ENCODE measurements at regions of chr7 and their contacts with region 1.

Region 1: GRCh38 chr7:104848138-104848990 is 165.6 kb upstream of the KMT2E start:
- DNase-seq: peak in 8 of 10 donors; percentile 26 to 72 (median 59)
- H3K4me3 ChIP-seq: peak overlapping the region in 2 of 59 donors; percentile 20 to 22
- H3K27ac ChIP-seq: peak overlapping the region in 52 of 59 donors; percentile 8 to 94 (median 72)
- H3K27me3 ChIP-seq: peaks cover 0 to 13% (median 0%) of the 10 kb centered on the region in 45 donors
- CTCF ChIP-seq: peak; percentile 63 to 95 (median 88)

Region 2: GRCh38 chr7:104231054-104232046 is 617.0 kb before region 1 on chr7:
- intact Hi-C with region 1: loop called in 1 of 2 experiments (anchors 10 kb)
- DNase-seq: peak in 9 of 10 donors; percentile 31 to 60 (median 53)
- H3K4me3 ChIP-seq: peak overlapping the region in 29 of 59 donors; percentile 0 to 47 (median 19)
- H3K27ac ChIP-seq: no peak overlapping the region
- H3K27me3 ChIP-seq: no peaks in the 10 kb centered on the region
- CTCF ChIP-seq: peak; percentile 67 to 93 (median 82)

Region 3: DNA sequence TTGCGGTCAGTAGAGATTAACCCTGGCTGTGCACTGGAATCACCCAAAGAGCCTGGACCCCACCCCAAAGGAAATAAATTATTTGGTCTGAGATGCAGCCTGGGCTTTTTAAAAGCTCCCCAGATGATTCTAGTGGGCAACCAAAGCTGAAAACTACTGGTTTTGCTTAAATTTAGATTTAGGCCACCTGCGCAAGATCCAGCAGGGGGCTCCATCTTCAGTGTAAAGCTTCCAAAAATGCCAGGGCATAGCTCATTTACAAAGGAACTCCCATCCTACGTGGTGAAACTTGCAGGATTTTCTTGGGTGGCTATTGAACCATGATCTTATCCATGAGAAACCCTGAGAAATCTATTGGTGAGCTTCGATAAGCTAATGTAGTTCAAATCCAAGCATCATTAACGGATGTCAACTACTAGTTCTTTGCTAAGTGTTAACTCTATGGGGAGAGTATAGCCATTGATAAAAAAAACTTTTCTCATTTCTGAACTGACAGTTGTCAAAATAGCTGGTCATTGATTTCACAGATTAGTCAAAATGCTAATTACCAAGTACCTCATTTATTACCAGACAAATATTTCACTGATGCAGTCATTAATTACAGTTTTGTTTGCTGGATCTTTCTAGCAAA is 204.7 kb before region 1 on chr7:
- intact Hi-C with region 1: loop called in 1 of 2 experiments (anchors 5 kb)
- DNase-seq: no peak
- H3K4me3 ChIP-seq: no peak overlapping the region
- H3K27ac ChIP-seq: no peak overlapping the region
- H3K27me3 ChIP-seq: peaks cover 0 to 8% (median 0%) of the 10 kb centered on the region in 45 donors
- CTCF ChIP-seq: peak in 34 of 56 donors; percentile 8 to 56 (median 26)

Region 4: DNA sequence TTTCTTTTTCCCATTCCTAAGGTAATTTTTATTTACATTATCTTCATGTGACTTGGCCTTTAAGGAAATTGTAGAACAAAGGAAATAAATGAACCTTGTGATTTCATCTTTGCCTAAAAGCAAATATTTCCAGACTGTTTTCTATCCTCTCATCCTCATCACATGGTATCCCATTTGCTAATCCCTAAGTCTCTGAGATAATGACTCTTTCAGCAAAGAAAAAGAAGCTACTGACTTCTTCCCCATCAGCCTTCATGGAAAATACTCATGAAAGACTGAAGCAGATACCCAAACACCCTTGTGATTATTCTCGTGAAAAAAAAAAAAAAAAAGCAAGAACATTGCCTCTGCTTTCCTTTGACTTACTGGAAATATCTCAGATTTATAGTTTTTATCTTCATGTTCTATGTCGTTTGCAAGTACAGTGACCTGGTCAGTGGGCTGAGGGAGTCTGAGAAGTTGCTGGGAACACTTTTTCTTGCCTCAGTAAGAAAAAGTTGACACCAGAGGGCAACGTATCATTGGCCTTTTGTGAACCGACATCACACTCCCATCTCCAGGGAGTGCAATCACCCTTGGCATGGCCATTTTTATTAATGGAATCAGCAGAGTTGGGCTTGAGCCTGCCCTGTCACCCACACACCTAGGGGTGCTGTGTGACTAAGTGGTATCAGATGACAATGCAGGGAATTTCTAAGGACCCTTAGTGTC is 80.4 kb before region 1 on chr7:
- intact Hi-C with region 1: loop called (anchors 1 to 2 kb)
- DNase-seq: peak in 1 of 10 donors; percentile 36
- H3K4me3 ChIP-seq: no peak overlapping the region
- H3K27ac ChIP-seq: peak overlapping the region in 2 of 59 donors; percentile 4 to 13
- H3K27me3 ChIP-seq: peaks cover 0 to 5% (median 0%) of the 10 kb centered on the region in 45 donors
- CTCF ChIP-seq: peak in 52 of 56 donors; percentile 17 to 73 (median 48)

Region 5: DNA sequence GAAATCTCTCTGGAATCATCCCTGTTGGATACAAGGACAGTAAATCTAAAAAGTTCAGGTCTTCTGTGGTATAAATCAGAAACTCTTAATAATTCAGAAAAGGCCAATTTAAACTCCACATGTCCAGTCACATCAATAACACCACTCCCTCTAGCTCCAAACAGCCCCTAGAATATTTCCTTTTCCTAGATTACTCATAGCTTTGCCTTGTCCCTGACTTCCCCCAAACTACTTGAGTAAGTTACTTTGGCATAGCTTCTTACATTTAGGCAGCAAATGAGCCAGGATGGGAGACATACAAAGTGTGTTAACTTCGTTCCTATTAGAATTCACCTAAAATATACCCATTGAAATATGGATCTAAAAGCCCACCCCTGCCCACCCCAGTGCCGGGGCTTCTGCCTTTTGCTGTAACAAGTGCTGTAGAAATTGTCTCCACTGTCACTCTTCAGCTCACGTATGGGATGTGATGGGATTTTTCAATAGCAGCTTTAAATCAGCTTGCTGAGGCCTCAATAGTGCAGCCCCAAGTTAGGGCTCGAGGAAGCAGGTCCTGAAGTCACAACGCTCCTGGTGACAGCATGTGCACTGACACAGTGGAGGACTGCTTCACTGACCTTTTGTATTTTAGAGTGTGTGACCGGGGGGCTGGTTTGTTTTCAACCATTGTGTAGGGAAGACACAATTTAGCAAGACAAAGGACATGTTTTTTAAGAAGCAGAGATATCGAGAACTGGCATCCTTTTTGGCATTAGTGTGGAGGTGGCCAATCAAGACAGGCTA is 52.6 kb before region 1 on chr7:
- intact Hi-C with region 1: loop called in 1 of 2 experiments (anchors 2 kb)
- DNase-seq: no peak
- H3K4me3 ChIP-seq: peak overlapping the region in 1 of 59 donors; percentile 27
- H3K27ac ChIP-seq: peak overlapping the region in 49 of 59 donors; percentile 1 to 83 (median 53)
- H3K27me3 ChIP-seq: no peaks in the 10 kb centered on the region
- CTCF ChIP-seq: no peak

Region 6: DNA sequence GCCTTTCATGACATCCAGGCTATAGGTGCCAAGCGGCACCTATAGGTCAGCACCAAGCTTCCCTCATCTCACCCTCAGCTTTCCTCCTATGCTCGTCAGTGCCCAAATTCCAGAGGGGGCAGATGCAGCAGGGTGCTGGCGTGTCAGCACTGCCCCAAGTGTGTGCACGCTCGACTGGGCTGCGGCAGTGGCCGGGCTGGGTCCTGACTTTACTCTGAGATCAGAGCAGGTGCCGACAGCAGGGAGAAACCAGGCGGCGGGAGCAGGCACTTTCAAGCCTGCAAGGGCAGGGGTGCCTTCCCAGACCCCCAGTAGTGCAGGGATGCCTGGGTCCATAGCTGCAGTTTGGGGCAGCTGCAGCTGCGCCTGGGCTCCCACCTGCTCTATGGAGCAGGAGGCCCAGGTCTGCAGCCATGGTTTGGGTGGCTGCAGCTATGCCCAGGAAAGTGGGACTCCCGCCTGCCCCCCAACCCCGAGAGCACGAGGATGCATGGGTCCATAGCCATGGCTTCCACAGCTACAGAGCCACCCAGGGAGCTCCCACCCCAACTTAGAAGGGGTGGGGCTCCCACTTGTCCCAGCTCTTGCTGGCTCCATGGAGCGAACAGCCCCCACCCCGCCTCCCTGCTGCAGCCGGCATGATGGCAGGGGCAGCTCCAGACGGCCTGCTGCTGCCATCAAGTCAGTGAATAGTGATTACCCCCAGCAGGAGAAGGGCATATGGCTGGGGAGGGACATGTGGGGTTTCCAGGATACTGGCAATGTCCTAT is 33.5 kb before region 1 on chr7:
- intact Hi-C with region 1: no loop called
- DNase-seq: no peak
- H3K4me3 ChIP-seq: no peak overlapping the region
- H3K27ac ChIP-seq: no peak overlapping the region
- H3K27me3 ChIP-seq: peaks cover 0 to 8% (median 0%) of the 10 kb centered on the region in 45 donors
- CTCF ChIP-seq: no peak

Region 7: GRCh38 chr7:104900525-104901239 is 52.3 kb after region 1 on chr7:
- intact Hi-C with region 1: loop called (anchors 5 to 10 kb)
- DNase-seq: no peak
- H3K4me3 ChIP-seq: peak overlapping the region in 7 of 59 donors; percentile 4 to 43 (median 14)
- H3K27ac ChIP-seq: peak overlapping the region in 58 of 59 donors; percentile 23 to 97 (median 90)
- H3K27me3 ChIP-seq: no peaks in the 10 kb centered on the region
- CTCF ChIP-seq: peak in 5 of 56 donors; percentile 5 to 20 (median 7)

Measured in dorsolateral prefrontal cortex (tissue), 120 donors.